ENCODE measurements at regions of chr11 and their contacts with region 1.

Region 1: GRCh38 chr11:95849087-95849825 is 59.0 kb downstream of the CEP57 start:
- DNase-seq: peak; percentile 18 to 65 (median 30)
- ATAC-seq: peak; percentile 96
- H3K4me3 ChIP-seq: no peak overlapping the region
- H3K27ac ChIP-seq: no peak overlapping the region
- H3K4me1 ChIP-seq: no peaks in the 10 kb centered on the region
- H3K27me3 ChIP-seq: no peaks in the 10 kb centered on the region
- CTCF ChIP-seq: peak; percentile 50 to 70 (median 61)
- EP300 ChIP-seq: no peak
- POLR2A ChIP-seq: no peak
- RAD21 ChIP-seq: peak; percentile 77 to 85

Region 2: DNA sequence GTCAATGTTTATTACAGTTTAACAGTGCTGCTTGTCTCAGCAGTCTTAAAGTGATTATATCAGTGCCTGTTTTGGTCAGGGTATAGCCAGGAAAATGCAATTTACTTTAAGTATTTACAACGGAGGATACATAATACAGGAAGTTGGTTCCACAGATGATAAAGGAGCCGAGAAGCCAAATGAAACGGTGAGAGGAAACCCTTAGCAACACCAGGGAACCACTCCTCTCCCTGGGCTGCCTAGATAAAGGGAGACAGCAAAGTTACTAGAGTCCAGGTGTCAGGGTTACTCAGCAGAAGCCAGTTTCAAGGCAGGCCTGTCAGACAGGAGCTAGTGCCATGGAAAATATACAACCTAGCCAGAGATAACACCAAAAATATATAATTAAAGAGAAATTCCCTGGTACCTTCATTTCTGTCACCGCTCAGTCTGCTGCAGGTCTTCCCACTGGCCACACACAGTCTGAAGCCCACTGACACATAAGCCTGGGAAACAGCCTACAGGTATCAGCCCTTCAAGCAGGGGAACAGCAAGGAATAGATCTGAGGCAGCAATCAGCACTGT is 115.2 kb before region 1 on chr11:
- CTCF ChIA-PET with region 1: no interaction called
- POLR2A ChIA-PET with region 1: no interaction called
- in situ Hi-C with region 1: no loop called
- intact Hi-C with region 1: no loop called
- DNase-seq: peak; percentile 52 to 97 (median 76)
- ATAC-seq: peak; percentile 98
- H3K4me3 ChIP-seq: no peak overlapping the region
- H3K27ac ChIP-seq: peak overlapping the region; percentile 72
- H3K4me1 ChIP-seq: peaks cover 7 to 21% of the 10 kb centered on the region in 2 experiments; a peak in 4 of 5 replicates
- H3K27me3 ChIP-seq: no peaks in the 10 kb centered on the region
- CTCF ChIP-seq: no peak
- EP300 ChIP-seq: peak; percentile 97
- POLR2A ChIP-seq: no peak; the same call in 1 of the 2 replicates
- RAD21 ChIP-seq: 0 out of 4 replicates have a peak, but pooled peaks of 1 of the 2 experiments have one; percentile 18

Region 3: GRCh38 chr11:95968585-95968984 is 119.3 kb after region 1 on chr11:
- CTCF ChIA-PET with region 1: no interaction called
- POLR2A ChIA-PET with region 1: no interaction called
- in situ Hi-C with region 1: no loop called
- intact Hi-C with region 1: loop called (anchors 1 kb)
- DNase-seq: peak in 1 of 4 experiments; percentile 25
- ATAC-seq: no peak
- H3K4me3 ChIP-seq: no peak overlapping the region
- H3K27ac ChIP-seq: no peak overlapping the region
- H3K4me1 ChIP-seq: peaks cover 0 to 5% of the 10 kb centered on the region in 2 experiments; a peak in 3 of 5 replicates
- H3K27me3 ChIP-seq: no peaks in the 10 kb centered on the region
- CTCF ChIP-seq: peak; percentile 23 to 47 (median 35); a peak in 3 of 6 replicates
- EP300 ChIP-seq: no peak
- POLR2A ChIP-seq: no peak
- RAD21 ChIP-seq: peak in 1 of 2 experiments; percentile 48; a peak in 2 of 4 replicates

Measured in K562 (cell line).